ENCODE measurements at regions of chr16 and their contacts with region 1.

Region 1: GRCh38 chr16:77480681-77481315 is 46.0 kb upstream of the ADAMTS18 start:
- DNase-seq: no peak
- ATAC-seq: no peak
- H3K4me3 ChIP-seq: no peak overlapping the region
- H3K27ac ChIP-seq: no peak overlapping the region
- H3K4me1 ChIP-seq: peaks cover 0 to 4% (median 0%) of the 10 kb centered on the region in 12 donors
- H3K27me3 ChIP-seq: no peaks in the 10 kb centered on the region
- CTCF ChIP-seq: no peak
- POLR2A ChIP-seq: no peak

Region 2: DNA sequence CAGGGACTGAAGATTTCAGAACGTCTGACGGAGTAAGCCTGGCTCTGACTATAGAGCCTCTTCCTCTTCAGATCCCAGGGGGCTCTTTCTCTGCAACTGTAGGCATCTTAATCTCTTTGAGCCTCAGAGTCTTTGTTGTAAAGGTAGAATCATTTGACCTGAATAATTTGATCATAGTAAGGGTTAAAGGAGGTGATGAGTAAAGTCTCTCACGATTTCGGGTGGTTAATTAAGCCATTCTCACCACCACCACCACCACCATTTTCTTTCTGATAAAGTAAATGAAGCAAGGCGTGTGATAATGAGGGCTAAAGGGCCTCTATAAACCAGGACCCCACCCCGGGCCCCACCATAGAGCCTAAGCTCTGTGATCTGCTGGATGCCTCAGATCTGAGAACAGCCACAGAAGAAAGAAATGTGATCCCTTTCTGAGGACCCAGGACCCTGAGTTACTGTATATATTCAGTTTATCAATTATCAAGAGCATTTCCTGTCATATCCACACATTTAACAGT is 12.9 kb before region 1 on chr16:
- intact Hi-C with region 1: loop called in 1 of 10 experiments (anchors 2 kb)
- DNase-seq: no peak
- ATAC-seq: no peak
- H3K4me3 ChIP-seq: no peak overlapping the region
- H3K27ac ChIP-seq: no peak overlapping the region
- H3K4me1 ChIP-seq: peaks cover 0 to 12% (median 0%) of the 10 kb centered on the region in 12 donors
- H3K27me3 ChIP-seq: no peaks in the 10 kb centered on the region
- CTCF ChIP-seq: no peak
- POLR2A ChIP-seq: no peak

Region 3: DNA sequence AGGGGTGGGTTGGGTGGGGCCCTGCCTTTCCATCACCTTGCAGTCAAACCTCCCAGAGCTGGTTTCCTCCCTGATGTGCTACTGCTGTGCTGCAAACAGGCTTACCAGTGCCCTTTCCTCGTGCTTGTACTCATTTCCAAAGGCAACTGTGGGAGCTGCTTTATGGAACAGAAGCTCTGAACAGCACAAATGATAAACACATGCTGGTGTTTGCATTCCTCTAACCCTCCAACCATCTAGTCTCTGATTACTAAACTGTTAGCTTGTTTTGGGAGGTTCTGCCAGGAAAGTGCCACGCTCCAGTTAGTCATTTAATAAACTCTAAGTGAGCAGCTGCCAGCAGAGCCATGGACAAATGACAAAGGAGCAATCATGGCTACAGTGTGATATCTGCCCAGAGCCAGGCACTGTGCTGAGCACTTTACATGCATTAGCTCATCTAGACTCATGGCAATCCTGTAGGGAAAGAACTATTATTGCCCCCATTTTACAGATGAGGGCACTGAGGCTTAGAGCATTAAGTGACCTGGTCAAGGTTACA is 417.9 kb after region 1 on chr16:
- intact Hi-C with region 1: no loop called
- DNase-seq: no peak
- ATAC-seq: peak in 2 of 4 donors; percentile 26 to 36
- H3K4me3 ChIP-seq: no peak overlapping the region
- H3K27ac ChIP-seq: peak overlapping the region in 1 of 12 donors; percentile 42
- H3K4me1 ChIP-seq: peaks cover 0 to 19% (median 5%) of the 10 kb centered on the region in 12 donors
- H3K27me3 ChIP-seq: no peaks in the 10 kb centered on the region
- CTCF ChIP-seq: no peak
- POLR2A ChIP-seq: no peak